HEK293 (cell line): ENCODE measurements at regions of chr1 and their contacts with region 1.

Region 1: DNA sequence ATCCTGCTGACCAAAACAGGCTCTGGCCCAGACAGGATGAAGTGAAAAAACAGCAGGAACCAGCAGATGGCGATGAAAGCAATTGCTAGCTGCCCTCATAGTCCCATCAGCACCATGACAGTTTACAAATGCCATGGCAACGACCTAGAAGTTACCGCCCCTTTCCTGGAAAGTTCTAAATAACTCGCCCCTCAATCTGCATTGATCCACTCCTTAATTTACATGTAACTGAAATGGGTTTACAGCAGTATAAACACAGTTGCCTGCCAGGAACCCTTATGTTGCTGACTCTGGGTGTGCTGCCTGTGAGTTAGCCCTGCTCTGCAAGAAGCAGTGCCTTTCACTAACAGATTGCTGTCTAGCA is 65.5 kb upstream of the CR1L start:
- H3K4me3 ChIP-seq: no peak overlapping the region
- H3K27ac ChIP-seq: no peak overlapping the region
- H3K4me1 ChIP-seq: no peaks in the 10 kb centered on the region
- CTCF ChIP-seq: peak; percentile 61; the same call in 1 of the 2 replicates

Region 2: DNA sequence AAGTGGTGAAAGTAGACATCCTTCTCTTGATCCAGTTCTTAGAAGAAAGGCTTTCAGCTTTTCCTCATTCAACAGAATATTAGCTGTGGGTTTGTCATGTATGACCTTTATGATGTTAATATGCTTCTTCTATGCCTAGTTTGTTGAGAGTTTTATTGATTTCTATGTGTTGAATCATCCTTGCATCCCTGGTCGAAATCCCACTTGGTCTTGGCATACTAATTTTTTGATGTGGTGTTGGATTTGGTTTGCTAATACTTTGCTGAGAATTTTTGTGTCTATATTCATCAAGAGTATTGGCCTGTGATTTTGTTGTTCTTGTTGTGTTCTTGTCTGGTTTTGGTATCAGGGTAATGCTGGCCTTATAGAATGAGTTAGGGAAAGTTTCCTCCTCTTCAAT is 237.1 kb before region 1 on chr1:
- CTCF ChIA-PET with region 1: interaction called, 10 read pairs
- POLR2A ChIA-PET with region 1: no interaction called
- H3K4me3 ChIP-seq: no peak overlapping the region
- H3K27ac ChIP-seq: no peak overlapping the region
- H3K4me1 ChIP-seq: no peaks in the 10 kb centered on the region
- CTCF ChIP-seq: no peak

Region 3: DNA sequence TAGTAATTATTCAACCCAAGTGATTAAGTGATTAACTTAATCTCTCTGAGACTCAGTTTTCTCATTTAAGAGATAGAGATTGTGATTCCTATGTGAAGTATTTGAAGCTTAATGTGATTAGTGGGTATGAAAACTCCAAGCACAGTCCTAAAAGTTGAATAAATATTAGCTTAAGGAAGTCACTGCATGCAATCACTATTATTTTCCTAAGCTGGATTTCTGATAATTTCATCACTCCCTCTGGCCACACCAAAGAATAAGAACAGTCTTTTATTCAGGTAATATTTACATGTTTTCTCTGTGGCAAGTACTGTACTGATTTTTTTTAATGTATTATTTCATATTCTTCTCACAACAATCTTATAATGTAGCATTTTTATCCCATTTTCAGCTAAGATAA is 226.9 kb before region 1 on chr1:
- CTCF ChIA-PET with region 1: no interaction called
- POLR2A ChIA-PET with region 1: no interaction called
- H3K4me3 ChIP-seq: no peak overlapping the region
- H3K27ac ChIP-seq: no peak overlapping the region
- H3K4me1 ChIP-seq: no peaks in the 10 kb centered on the region
- CTCF ChIP-seq: no peak

Region 4: DNA sequence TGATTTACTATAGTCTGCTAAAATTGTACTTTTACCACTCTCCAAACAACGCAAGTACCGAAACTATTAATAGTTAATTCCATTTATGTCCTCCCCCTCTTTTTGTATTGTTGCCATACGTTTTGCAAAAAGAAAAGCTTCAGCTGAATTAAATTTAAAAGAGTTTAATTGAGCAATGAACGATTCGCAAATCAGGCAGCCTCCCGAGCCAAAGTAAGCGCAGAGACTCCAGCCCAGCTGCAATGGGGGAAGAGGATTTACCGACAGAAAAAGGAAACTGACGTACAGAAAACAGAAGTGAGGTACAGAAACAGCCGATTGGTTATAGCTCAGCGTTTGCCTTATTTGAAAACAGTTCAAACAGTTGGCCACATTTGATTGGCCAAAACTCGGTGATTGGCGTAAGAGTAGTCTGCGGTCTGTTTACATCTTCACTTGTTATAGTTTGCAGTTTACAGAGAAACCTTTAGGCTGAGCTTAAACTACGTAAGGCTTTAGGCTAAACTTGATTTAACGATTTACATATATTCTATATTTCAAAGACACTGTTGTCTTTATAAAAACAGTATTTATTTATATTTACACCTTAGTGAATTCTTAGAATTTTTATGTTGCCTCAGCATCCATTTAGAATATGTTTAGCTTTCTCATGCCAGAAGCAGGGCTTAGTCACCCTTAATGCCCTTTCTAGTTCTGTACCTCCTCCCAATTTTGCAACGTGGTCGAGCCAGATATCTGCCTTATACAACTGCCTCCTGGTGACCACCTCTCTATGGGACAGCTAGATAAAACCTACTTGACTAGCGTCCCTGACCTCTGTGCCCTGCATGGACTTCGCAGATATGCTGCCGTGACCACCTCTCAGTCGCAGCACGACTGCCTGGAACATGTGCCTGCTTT is 59.7 kb before region 1 on chr1:
- CTCF ChIA-PET with region 1: no interaction called
- POLR2A ChIA-PET with region 1: no interaction called
- H3K4me3 ChIP-seq: no peak overlapping the region
- H3K27ac ChIP-seq: no peak overlapping the region
- H3K4me1 ChIP-seq: no peaks in the 10 kb centered on the region
- CTCF ChIP-seq: no peak

Region 5: DNA sequence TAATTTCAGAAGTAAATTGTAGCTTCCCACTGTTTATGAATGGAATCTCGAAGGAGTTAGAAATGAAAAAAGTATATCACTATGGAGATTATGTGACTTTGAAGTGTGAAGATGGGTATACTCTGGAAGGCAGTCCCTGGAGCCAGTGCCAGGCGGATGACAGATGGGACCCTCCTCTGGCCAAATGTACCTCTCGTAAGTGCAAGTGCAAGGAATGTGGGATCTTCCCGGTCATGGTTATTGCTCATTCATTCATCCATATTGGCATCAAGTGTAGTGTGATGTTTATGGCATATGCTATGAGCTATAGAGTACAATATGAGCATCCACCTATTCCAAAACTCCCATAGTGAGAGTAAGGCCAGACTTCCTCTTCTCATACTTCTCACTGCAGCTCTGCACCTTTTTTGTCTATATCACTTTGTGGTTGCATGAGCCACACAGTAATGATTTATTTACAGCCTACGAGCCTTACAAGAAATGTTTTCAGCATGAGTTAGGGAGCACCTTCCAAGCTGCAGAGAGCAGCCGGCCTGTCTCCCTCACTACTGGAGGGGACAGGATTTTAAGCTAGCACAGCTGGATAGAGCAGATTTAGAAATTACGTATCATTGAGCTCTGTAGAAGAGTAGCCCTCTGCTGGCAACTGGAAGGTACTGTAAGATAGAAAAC is 40.6 kb after region 1 on chr1:
- CTCF ChIA-PET with region 1: interaction called, 10 read pairs
- POLR2A ChIA-PET with region 1: no interaction called
- H3K4me3 ChIP-seq: no peak overlapping the region
- H3K27ac ChIP-seq: no peak overlapping the region
- H3K4me1 ChIP-seq: no peaks in the 10 kb centered on the region
- CTCF ChIP-seq: peak; percentile 40; the same call in 1 of the 2 replicates

Region 6: DNA sequence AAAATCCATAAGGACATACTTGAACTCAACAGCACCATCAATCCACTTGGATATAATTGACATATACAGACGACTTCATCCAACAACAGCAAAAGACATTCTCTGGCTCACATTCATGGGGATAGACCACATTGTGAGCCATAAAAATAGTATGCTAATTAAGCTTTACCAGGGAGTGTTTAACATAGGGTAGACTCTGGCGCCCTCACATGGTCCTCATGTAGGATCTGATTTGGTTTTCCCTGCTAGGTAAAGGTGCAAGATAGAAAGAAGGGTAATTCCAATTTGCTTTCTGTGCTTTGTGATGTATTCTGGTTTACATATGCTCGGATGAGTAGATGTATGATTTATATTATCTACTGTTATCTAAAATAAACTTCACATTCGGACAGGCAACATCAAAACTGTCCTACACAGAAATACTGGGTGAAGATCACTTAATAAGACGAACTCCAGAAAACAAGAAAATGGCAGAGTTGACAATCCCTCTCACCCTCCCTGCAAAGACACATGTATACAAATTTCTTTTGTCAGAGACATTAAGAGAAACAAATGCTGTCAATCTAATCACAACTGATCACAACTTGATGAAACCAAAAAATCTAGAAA is 93.2 kb after region 1 on chr1:
- CTCF ChIA-PET with region 1: interaction called, 22 read pairs
- POLR2A ChIA-PET with region 1: no interaction called
- H3K4me3 ChIP-seq: no peak overlapping the region
- H3K27ac ChIP-seq: no peak overlapping the region
- H3K4me1 ChIP-seq: no peaks in the 10 kb centered on the region
- CTCF ChIP-seq: no peak; the same call in 1 of the 2 replicates

Region 7: GRCh38 chr1:207698822-207699483 is 119.5 kb after region 1 on chr1:
- CTCF ChIA-PET with region 1: interaction called, 30 read pairs
- POLR2A ChIA-PET with region 1: no interaction called
- H3K4me3 ChIP-seq: no peak overlapping the region
- H3K27ac ChIP-seq: no peak overlapping the region
- H3K4me1 ChIP-seq: no peaks in the 10 kb centered on the region
- CTCF ChIP-seq: peak; percentile 60; the same call in 1 of the 2 replicates